Common myeloid progenitor, CD34-positive (primary cell): ENCODE measurements at regions of chr4 and their contacts with region 1.

Region 1: GRCh38 chr4:16026160-16026761 is 57.6 kb downstream of the PROM1 start:
- DNase-seq: peak; percentile 80 to 89 (median 83)
- H3K4me3 ChIP-seq: no peak overlapping the region
- H3K27ac ChIP-seq: no peak overlapping the region
- H3K4me1 ChIP-seq: peaks cover 8 to 40% (median 27%) of the 10 kb centered on the region in 4 experiments
- H3K27me3 ChIP-seq: no peaks in the 10 kb centered on the region

Region 2: DNA sequence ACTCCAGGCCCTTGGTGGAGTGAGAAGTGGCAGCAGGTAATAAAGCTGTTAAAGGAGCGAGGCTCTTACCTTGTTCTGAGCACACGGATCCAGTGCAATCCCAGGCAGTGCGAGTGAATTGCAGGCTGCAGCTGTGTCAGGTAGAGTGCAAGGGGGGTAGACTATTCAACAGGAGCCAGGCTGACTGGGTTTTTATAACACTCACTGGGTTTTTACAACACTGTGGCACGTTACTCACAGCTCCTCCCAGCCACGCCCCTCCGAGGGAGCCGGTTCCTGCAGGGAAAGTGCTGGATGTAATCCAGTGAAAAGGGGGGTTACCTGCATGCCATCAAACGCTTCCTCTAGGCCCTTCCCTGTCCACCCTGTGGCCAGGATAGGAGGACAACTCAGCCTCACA is 88.1 kb before region 1 on chr4:
- CTCF ChIA-PET with region 1: no interaction called
- POLR2A ChIA-PET with region 1: no interaction called
- DNase-seq: no peak
- H3K4me3 ChIP-seq: no peak overlapping the region
- H3K27ac ChIP-seq: no peak overlapping the region
- H3K4me1 ChIP-seq: no peaks in the 10 kb centered on the region
- H3K27me3 ChIP-seq: peaks cover 0 to 8% (median 0%) of the 10 kb centered on the region in 5 experiments

Region 3: GRCh38 chr4:15965325-15965724 is 60.9 kb before region 1 on chr4:
- CTCF ChIA-PET with region 1: no interaction called
- POLR2A ChIA-PET with region 1: no interaction called
- DNase-seq: peak in 2 of 3 donors; percentile 37 to 40
- H3K4me3 ChIP-seq: no peak overlapping the region
- H3K27ac ChIP-seq: no peak overlapping the region
- H3K4me1 ChIP-seq: peaks cover 5 to 15% (median 10%) of the 10 kb centered on the region in 4 experiments
- H3K27me3 ChIP-seq: no peaks in the 10 kb centered on the region

Region 4: GRCh38 chr4:16043642-16044498 is 17.6 kb after region 1 on chr4:
- CTCF ChIA-PET with region 1: interaction called, 13 read pairs
- POLR2A ChIA-PET with region 1: no interaction called
- DNase-seq: peak in 1 of 3 donors; percentile 49
- H3K4me3 ChIP-seq: peak overlapping the region in 1 of 7 experiments; percentile 12
- H3K27ac ChIP-seq: peak overlapping the region in 1 of 2 experiments; percentile 67
- H3K4me1 ChIP-seq: peaks cover 23 to 73% (median 48%) of the 10 kb centered on the region in 4 experiments
- H3K27me3 ChIP-seq: no peaks in the 10 kb centered on the region

Region 5: GRCh38 chr4:16056681-16057385 is 30.6 kb after region 1 on chr4:
- CTCF ChIA-PET with region 1: interaction called, 10 read pairs
- POLR2A ChIA-PET with region 1: no interaction called
- DNase-seq: no peak
- H3K4me3 ChIP-seq: peak overlapping the region in 3 of 7 experiments; percentile 20 to 53 (median 23)
- H3K27ac ChIP-seq: peak overlapping the region; percentile 97
- H3K4me1 ChIP-seq: peaks cover 29 to 93% (median 78%) of the 10 kb centered on the region in 4 experiments
- H3K27me3 ChIP-seq: no peaks in the 10 kb centered on the region

Region 6: DNA sequence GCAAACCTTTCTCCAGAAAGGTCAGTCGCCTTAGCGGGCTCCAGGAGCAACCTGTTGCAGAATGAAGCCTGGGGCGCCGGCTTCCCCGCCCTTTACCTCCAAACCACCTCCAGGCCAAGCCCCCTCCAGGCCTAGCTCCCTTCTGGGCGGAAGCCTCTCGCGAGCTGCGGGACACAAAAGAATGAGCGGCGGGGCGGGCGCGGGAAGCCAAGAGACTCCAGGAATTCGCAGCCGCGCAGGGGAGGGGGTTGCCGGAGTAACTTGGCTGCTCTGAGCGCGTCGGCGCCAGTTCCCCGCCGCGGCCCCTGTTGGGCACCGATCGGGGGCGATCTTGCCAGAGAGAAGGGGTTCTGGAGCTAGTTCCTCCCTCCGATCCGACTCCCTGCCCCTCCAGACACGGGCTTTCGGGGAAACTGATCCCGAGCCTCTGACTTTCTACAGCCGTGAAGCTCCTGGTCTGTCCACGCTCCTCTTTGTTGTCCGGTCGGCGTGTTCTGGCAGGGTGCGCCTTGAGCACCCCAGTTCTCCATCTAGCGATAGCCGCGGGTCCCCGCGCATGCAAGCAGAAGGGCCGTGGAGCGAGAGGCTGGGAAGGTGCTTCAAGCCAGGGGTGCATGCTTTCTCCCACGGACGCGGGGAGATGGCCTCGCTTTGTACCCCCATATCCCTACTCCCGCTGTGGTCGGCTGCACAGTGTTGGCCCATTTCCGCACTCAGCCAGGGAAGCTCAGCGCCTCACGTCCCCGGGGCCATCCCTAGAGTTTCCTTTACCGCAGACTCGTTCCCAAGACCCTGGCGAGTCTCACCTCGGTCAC is 56.4 kb after region 1 on chr4:
- CTCF ChIA-PET with region 1: interaction called, 11 read pairs
- POLR2A ChIA-PET with region 1: interaction called, 5 read pairs
- DNase-seq: peak; percentile 35 to 71 (median 59)
- H3K4me3 ChIP-seq: peak overlapping the region; percentile 65 to 99 (median 92)
- H3K27ac ChIP-seq: peak overlapping the region; percentile 66 to 82
- H3K4me1 ChIP-seq: peaks cover 2 to 64% (median 53%) of the 10 kb centered on the region in 4 experiments
- H3K27me3 ChIP-seq: no peaks in the 10 kb centered on the region

Region 7: DNA sequence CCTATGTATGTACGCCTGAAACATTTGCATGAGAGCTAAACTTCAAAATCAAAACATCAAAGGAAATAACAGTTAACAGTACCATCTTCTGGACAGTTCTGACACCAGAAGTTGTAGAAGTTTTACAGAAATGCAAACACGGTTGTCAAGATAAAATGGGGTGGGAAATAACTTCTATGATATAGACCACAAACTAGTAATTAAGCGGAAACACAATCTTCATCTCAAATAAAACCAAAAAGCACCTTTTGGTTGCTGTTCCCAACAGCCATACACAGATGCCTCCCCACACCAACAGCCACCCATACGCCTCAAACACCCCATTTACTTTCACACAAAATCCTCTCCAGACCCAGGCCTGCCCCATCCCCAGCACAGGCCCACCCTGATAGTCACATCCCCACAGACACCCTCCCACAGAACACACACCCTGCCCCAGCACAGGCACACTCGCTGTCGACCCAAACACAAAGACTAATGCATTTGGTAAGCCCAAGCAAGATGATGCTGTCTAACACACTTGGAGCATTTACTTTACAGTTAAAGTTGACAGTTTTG is 135.7 kb after region 1 on chr4:
- CTCF ChIA-PET with region 1: interaction called, 22 read pairs
- POLR2A ChIA-PET with region 1: interaction called, 3 read pairs
- DNase-seq: peak; percentile 45 to 80 (median 76)
- H3K4me3 ChIP-seq: no peak overlapping the region
- H3K27ac ChIP-seq: peak overlapping the region; percentile 4 to 41
- H3K4me1 ChIP-seq: peaks cover 0 to 20% (median 7%) of the 10 kb centered on the region in 4 experiments
- H3K27me3 ChIP-seq: no peaks in the 10 kb centered on the region

Region 8: DNA sequence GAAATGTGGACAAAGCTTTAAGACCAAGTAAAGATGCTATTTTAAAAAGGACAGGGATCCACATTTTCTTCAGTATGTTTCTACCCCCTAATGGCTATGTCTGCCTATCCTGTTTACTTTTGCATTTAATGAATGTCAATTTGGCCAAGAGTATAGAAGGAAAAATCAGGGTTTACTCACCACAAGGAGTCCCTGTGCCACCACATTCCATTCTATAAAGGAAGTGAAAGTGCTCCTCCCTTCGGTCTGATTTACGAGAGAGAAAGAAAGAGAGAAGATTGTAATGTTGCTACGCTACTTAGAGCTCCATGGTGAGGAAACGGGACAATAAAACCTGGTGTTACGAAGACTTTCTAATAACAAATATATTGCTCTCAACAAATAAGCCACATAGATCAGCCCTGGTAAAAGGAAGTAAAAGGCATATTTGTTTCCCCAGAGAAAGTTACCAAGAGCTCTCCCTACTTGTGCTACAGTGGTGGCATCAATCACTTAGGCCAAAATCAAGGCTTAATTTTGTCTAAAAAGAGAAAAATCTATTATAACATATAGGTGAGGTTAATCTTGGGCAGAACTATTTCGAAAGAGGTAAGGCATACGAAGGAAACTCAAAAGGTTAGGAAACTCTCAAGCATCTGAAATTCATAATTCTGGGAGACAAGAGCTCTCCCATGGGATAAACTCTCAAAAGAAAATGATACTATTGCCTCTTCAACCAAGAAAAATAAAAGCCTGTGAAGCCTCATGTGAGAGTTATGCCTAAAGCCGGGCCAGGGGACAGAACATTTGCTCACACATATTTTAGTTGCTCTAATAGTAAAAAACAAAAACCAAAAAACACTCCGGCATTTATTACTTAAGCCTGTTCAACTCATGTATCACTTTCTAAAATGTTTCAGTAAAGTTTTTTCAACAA is 170.5 kb after region 1 on chr4:
- CTCF ChIA-PET with region 1: interaction called, 14 read pairs
- POLR2A ChIA-PET with region 1: interaction called, 5 read pairs
- DNase-seq: peak; percentile 55 to 70 (median 67)
- H3K4me3 ChIP-seq: peak overlapping the region in 4 of 7 experiments; percentile 15 to 53 (median 40)
- H3K27ac ChIP-seq: no peak overlapping the region
- H3K4me1 ChIP-seq: peaks cover 9 to 22% (median 13%) of the 10 kb centered on the region in 4 experiments
- H3K27me3 ChIP-seq: no peaks in the 10 kb centered on the region